GM13977 (cell line): ENCODE measurements at regions of chr17 and their contacts with region 1.

Region 1: GRCh38 chr17:27455914-27456680 is at the start of gene KSR1:
- DNase-seq: peak; percentile 96
- CTCF ChIP-seq: peak; percentile 55

Region 2: GRCh38 chr17:27379888-27380534 is 76.1 kb before region 1 on chr17:
- in situ Hi-C with region 1: loop called (anchors 10 kb)
- DNase-seq: no peak
- CTCF ChIP-seq: no peak

Region 3: DNA sequence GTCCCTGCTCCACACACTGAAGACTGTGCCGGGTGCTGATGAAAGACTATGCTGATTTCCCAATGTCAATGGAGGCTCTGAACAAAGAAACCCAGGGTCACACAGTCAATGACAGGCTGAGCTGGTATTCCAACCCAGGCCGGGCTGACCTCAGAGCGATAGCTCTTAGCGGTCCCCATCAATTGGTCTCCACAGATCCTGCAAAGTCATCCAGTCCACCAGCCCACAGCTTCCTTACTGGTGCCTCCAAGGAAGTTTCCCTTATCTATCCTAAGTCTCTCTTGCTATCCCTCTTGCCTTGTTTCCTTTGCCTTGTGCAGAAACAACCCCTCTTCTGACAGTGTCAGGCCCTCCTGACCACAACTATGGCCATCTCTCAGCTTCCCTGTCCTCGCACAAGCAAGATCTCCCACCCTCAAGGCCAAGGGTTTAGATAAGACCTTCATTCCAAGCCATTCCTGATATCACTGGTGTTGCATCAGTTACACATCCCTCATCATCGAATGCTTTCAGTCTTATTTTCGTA is 52.6 kb before region 1 on chr17:
- in situ Hi-C with region 1: no loop called
- DNase-seq: no peak
- CTCF ChIP-seq: no peak

Region 4: GRCh38 chr17:27526604-27527230 is 70.6 kb after region 1 on chr17:
- in situ Hi-C with region 1: no loop called
- DNase-seq: no peak
- CTCF ChIP-seq: no peak